ENCODE measurements at regions of chr10 and their contacts with region 1.

Region 1: DNA sequence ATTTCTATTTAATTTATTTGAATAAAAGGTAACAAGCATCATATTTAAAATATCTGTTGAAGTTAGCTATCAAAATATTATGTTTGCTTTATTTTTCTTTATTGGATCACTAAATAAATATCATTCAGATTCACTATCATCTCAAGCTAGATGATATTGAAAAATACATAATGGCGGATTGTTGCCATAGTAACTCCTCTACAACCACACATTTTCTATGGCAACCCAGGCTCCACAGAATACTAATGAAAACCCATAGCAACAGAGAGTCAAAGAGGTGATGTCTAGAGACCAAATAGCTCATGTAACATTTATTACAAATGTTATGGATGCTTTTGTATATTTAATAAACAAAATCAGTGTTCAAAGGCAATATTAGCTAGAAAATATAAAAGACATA is 148.9 kb upstream of the CDK1 start:
- DNase-seq: no peak
- H3K4me3 ChIP-seq: no peak overlapping the region
- H3K27ac ChIP-seq: no peak overlapping the region
- H3K4me1 ChIP-seq: no peaks in the 10 kb centered on the region
- H3K27me3 ChIP-seq: no peaks in the 10 kb centered on the region
- CTCF ChIP-seq: no peak

Region 2: DNA sequence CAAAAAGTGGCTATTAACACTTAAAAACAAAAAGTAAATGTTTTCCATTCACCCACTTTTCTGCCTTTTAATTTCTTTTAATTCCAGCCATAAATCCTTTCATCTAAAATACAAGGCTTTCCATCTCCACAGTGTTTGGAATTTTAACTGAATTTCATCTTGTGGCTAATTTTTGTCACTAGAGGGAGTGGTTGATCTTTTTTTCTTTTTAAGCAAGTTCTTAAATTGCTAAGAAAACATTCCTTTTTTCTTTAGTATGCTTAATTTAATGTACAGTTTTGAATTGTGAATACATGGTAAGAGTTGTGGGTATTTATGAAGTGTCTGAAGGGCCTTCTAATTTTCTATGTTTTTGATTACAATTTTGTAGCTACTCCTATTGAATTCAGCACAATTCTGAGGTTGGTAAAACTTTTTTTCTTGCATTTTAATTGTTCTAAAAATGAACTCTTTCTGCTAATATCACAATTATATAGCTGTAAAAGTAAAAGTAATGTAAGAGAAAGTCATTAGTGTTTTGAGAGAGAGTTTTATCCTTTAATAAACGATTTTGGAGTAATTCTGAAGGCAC is 184.8 kb before region 1 on chr10:
- dilution Hi-C with region 1: loop called (anchors 10 kb)
- DNase-seq: no peak
- H3K4me3 ChIP-seq: no peak overlapping the region
- H3K27ac ChIP-seq: no peak overlapping the region
- H3K4me1 ChIP-seq: peaks cover 10% of the 10 kb centered on the region
- H3K27me3 ChIP-seq: no peaks in the 10 kb centered on the region
- CTCF ChIP-seq: peak in 2 of 3 experiments; percentile 36 to 53

Region 3: GRCh38 chr10:60801522-60801921 is 172.2 kb after region 1 on chr10:
- dilution Hi-C with region 1: no loop called
- DNase-seq: no peak
- H3K4me3 ChIP-seq: no peak overlapping the region
- H3K27ac ChIP-seq: no peak overlapping the region
- H3K4me1 ChIP-seq: no peaks in the 10 kb centered on the region
- H3K27me3 ChIP-seq: no peaks in the 10 kb centered on the region
- CTCF ChIP-seq: no peak

Region 4: GRCh38 chr10:60944159-60944909 is 315.0 kb after region 1 on chr10 and contains the start of gene RHOBTB1:
- dilution Hi-C with region 1: no loop called
- DNase-seq: no peak
- H3K4me3 ChIP-seq: peak within 1 kb of the TSS; percentile 64 to 83 (median 70)
- H3K27ac ChIP-seq: peak within 1 kb of the TSS; percentile 32
- H3K4me1 ChIP-seq: peaks cover 7% of the 10 kb centered on the region
- H3K27me3 ChIP-seq: peaks cover 9% of the 10 kb centered on the region
- CTCF ChIP-seq: no peak
- polyA plus RNA-seq, gene RHOBTB1: 4.6 to 6.1 TPM (median 5.5 TPM) in 3 replicates